ENCODE measurements at regions of chr4 and their contacts with region 1.

Region 1: DNA sequence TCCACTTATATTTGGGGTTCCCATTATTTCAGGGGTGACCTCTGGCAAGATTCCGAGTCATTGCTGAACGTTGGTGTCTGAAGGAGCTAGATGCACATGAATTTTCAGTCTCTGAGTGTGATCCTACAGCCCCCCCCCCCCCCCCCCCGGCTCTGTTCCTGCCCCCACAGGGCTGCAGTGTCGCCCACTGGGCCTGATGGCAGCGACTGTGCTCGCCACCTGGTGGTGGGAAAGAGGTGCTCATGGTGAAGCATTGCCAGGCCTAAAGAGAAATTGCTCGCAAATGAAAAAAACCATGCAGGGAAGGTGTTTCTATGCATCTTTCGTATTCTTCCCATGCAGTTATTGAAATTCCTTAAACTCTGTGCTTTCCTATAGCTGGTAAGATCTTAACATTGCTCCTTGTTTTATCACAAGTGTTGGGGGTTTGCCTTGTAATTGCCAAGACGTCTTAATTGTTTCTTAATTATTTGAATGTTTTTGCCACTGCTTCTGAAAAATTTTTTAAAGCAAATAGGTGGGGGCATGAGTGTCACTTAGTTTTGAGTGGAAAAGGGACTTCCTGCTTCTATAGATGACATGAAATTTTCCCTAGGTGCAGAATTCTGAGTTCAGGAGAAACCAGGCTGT is 63.2 kb downstream of the CLDN22 start:
- DNase-seq: no peak
- ATAC-seq: peak; percentile 96
- H3K4me3 ChIP-seq: no peak overlapping the region
- H3K27ac ChIP-seq: no peak overlapping the region
- H3K4me1 ChIP-seq: no peaks in the 10 kb centered on the region
- H3K27me3 ChIP-seq: no peaks in the 10 kb centered on the region; a peak in 1 of 4 replicates
- CTCF ChIP-seq: peak; percentile 69 to 85 (median 72)
- EP300 ChIP-seq: no peak
- POLR2A ChIP-seq: no peak
- RAD21 ChIP-seq: peak; percentile 68

Region 2: DNA sequence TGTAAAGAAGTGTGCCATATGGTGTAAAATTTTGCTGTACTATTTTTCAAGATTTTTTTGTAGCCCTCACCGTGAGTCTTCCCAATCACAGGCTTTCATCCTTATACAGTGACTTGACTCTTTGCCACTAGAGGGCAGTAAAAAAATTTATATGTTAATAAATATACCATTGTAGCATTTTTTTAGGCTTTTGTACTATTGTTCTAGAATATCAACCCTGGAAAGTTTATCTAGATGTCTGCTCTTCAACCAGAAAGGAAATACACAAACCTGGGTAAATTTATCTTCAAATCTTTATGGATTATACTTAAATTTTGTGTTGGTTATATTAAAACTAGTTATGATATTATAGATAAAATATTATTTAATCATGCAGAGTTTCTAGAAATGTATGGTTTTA is 778.4 kb before region 1 on chr4:
- CTCF ChIA-PET with region 1: no interaction called
- POLR2A ChIA-PET with region 1: no interaction called
- RAD21 ChIA-PET with region 1: no interaction called
- SMC1A ChIA-PET with region 1: no interaction called
- in situ Hi-C with region 1: no loop called
- intact Hi-C with region 1: loop called (anchors 10 kb)
- DNase-seq: no peak
- ATAC-seq: peak; percentile 82
- H3K4me3 ChIP-seq: no peak overlapping the region
- H3K27ac ChIP-seq: no peak overlapping the region
- H3K4me1 ChIP-seq: no peaks in the 10 kb centered on the region
- H3K27me3 ChIP-seq: no peaks in the 10 kb centered on the region
- CTCF ChIP-seq: peak; percentile 42 to 48 (median 43); a peak in 5 of 6 replicates
- EP300 ChIP-seq: no peak
- POLR2A ChIP-seq: no peak
- RAD21 ChIP-seq: peak; percentile 48